Left lung (tissue), 14 donors: ENCODE measurements at regions of chr17 and their contacts with region 1.

Region 1: GRCh38 chr17:78421484-78422266 is 43.2 kb downstream of the PGS1 start:
- DNase-seq: peak; percentile 55 to 92 (median 80)
- ATAC-seq: peak; percentile 84
- H3K4me3 ChIP-seq: no peak overlapping the region
- H3K27ac ChIP-seq: peak overlapping the region in 1 of 2 donors; percentile 93
- H3K4me1 ChIP-seq: peaks cover 15 to 96% of the 10 kb centered on the region in 2 donors
- H3K27me3 ChIP-seq: no peaks in the 10 kb centered on the region
- CTCF ChIP-seq: peak; percentile 99

Region 2: GRCh38 chr17:78250891-78251794 is 170.5 kb before region 1 on chr17:
- intact Hi-C with region 1: loop called in 1 of 2 experiments (anchors 10 kb)
- DNase-seq: peak; percentile 73 to 99 (median 90)
- ATAC-seq: peak; percentile 91
- H3K4me3 ChIP-seq: no peak overlapping the region
- H3K27ac ChIP-seq: peak overlapping the region in 1 of 2 donors; percentile 34
- H3K4me1 ChIP-seq: peaks cover 6 to 54% of the 10 kb centered on the region in 2 donors
- H3K27me3 ChIP-seq: no peaks in the 10 kb centered on the region
- CTCF ChIP-seq: peak; percentile 99 to 100

Region 3: GRCh38 chr17:78360371-78361224 is 61.1 kb before region 1 on chr17:
- intact Hi-C with region 1: loop called in 1 of 2 experiments (anchors 5 kb)
- DNase-seq: peak; percentile 75 to 100 (median 92)
- ATAC-seq: peak; percentile 77
- H3K4me3 ChIP-seq: peak overlapping the region; percentile 31 to 96
- H3K27ac ChIP-seq: peak overlapping the region; percentile 93 to 98
- H3K4me1 ChIP-seq: peaks cover 31 to 60% of the 10 kb centered on the region in 2 donors
- H3K27me3 ChIP-seq: no peaks in the 10 kb centered on the region
- CTCF ChIP-seq: peak; percentile 85 to 96

Region 4: DNA sequence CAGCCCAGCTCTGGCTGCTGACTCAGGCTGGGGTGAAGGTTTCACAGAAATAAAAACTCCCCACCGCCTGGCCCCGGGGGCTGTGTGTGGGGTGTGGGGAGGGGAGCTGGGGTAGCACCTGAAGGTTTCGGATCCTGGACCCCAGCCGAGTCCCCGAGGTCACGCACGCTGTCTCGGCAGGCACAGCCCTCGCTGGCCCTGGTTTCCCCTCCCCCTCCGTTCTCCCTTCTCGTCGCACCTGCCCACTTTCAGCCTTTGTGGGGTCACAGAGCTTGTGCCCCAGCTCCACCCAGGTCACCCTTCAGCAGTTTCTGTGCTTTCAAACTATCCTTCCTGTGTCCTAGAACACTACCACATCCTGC is 50.9 kb after region 1 on chr17:
- intact Hi-C with region 1: no loop called
- DNase-seq: peak in 1 of 4 donors; percentile 60
- ATAC-seq: no peak
- H3K4me3 ChIP-seq: no peak overlapping the region
- H3K27ac ChIP-seq: no peak overlapping the region
- H3K4me1 ChIP-seq: no peaks in the 10 kb centered on the region
- H3K27me3 ChIP-seq: peaks cover 0 to 7% of the 10 kb centered on the region in 2 donors
- CTCF ChIP-seq: no peak